Right cardiac atrium (tissue), 5 donors: ENCODE measurements at regions of chr7 and their contacts with region 1.

Region 1: DNA sequence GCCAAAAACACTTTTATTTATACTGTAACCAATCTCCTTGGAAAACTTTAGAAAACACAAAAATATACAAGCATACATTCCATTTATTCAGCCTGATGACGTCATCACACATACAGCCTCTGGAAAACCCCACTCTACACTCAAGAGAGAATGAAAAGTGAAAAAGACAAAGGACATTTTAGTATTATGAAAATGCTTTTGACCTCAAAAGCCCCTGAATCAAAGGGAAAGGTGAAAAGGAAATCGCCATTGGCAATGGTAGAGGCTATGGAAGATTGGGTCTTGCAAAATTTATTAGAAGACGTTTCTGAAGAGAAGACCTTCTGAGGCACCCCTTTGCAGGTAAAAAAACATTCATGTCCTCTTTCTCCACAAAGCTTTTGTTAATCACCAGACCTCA is 82.9 kb upstream of the STRIP2 start:
- DNase-seq: no peak
- ATAC-seq: no peak
- H3K4me3 ChIP-seq: no peak overlapping the region
- H3K27ac ChIP-seq: no peak overlapping the region
- H3K4me1 ChIP-seq: no peaks in the 10 kb centered on the region
- H3K27me3 ChIP-seq: no peaks in the 10 kb centered on the region

Region 2: GRCh38 chr7:129644634-129645230 is 293.4 kb after region 1 on chr7:
- intact Hi-C with region 1: loop called in 1 of 4 experiments (anchors 10 kb)
- DNase-seq: no peak
- ATAC-seq: peak in 1 of 2 donors; percentile 29
- H3K4me3 ChIP-seq: no peak overlapping the region
- H3K27ac ChIP-seq: no peak overlapping the region
- H3K4me1 ChIP-seq: no peaks in the 10 kb centered on the region
- H3K27me3 ChIP-seq: no peaks in the 10 kb centered on the region